OCI-LY7 (cell line): ENCODE measurements at regions of chr5 and their contacts with region 1.

Region 1: DNA sequence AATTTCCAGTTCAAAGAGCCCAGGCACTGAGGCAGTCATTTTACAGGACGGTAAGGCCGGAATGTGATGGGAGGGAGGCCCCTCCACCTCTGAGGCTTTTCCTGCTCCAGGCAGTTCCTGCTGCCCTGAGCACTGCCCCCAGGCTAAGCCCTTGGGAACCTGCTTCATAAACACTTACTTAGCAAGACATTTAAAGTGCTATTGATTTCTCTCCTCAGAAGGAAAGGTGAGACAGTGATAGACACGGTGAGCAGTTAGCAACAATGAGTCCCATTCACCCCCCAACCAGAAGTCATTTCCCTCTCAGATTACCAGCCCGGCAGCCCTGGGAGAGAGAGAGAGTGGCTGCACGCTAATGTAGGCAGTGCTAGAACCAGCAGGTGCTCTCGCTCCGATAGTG is 462.5 kb downstream of the SPOCK1 start:
- DNase-seq: no peak
- H3K4me3 ChIP-seq: no peak overlapping the region
- H3K27ac ChIP-seq: no peak overlapping the region
- H3K4me1 ChIP-seq: no peaks in the 10 kb centered on the region
- CTCF ChIP-seq: no peak

Region 2: DNA sequence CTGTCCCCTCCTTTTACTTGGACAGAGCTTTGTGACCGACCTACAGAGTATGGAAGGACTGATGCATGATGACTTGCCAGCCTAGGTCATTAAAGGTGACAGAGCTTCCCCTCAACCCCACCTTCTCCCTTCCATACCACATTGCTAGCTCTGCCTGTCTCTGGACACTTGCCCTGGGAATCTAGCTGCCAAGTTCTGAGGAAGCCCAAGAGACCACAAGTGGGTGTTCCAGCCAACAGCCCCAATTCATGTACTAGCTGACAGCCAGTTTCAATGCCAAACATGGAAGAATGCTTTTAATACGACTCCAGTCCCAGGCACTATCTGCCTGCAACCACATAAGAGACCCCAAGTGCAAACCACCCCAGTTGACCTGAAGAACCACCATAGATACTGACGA is 14.6 kb before region 1 on chr5:
- CTCF ChIA-PET with region 1: interaction called, 3 read pairs
- POLR2A ChIA-PET with region 1: interaction called, 31 read pairs
- intact Hi-C with region 1: no loop called
- DNase-seq: no peak
- H3K4me3 ChIP-seq: no peak overlapping the region
- H3K27ac ChIP-seq: no peak overlapping the region
- H3K4me1 ChIP-seq: peaks cover 25% of the 10 kb centered on the region
- CTCF ChIP-seq: no peak